ENCODE measurements at regions of chr20 and their contacts with region 1.

Region 1: GRCh38 chr20:23492292-23492691 is 1.4 kb downstream of the CST8 start:
- DNase-seq: no peak
- ATAC-seq: no peak
- H3K4me3 ChIP-seq: no peak overlapping the region
- H3K4me3 Mint-ChIP-seq: no peak overlapping the region
- H3K27ac ChIP-seq: no peak overlapping the region
- H3K27ac Mint-ChIP-seq: no peak overlapping the region
- H3K4me1 ChIP-seq: no peaks in the 10 kb centered on the region
- H3K4me1 Mint-ChIP-seq: no peaks in the 10 kb centered on the region
- H3K27me3 ChIP-seq: no peaks in the 10 kb centered on the region
- H3K27me3 Mint-ChIP-seq: no peaks in the 10 kb centered on the region
- CTCF ChIP-seq: no peak

Region 2: DNA sequence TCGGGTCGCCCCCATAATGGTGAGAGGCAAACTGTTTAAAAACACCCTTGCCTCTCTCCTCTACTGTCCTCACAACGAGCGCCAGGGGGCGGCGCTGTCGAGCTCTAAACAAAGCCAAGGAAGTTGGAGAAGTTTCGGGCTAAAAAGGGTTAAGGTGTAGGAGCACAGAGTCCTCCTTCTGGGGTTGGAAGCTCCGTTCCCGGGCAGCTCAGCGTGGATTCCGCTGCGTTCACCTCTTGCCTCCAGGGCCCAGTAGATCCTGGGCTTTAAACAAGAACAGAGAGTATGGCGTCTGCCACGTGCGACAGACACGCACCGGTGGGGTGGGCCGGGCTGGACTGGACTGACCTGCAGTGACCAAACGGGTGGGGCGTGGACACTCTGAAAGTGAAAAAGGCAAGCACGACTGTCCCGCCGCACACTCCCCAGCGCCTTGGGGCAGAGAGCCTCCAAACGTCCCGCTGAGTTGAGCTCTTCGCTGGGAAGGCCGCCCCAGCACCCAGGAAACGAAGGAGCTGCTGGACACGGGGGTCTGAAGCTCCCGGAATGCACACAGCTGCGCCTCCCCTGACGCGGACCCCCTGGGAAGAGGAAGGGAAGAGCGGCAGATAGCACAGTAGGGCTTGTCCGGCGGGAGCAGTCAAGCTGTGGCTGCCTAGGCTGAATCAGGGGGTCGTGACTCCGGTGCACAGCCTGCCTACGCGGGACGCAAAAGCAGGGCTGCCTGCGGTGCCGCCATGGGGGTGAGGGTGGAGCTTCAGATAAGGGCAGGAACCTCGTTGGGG is 441.3 kb before region 1 on chr20:
- CTCF ChIA-PET with region 1: no interaction called
- POLR2A ChIA-PET with region 1: no interaction called
- intact Hi-C with region 1: no loop called
- DNase-seq: peak in 3 of 14 experiments; percentile 19 to 52 (median 51)
- ATAC-seq: no peak
- H3K4me3 ChIP-seq: peak overlapping the region; percentile 33
- H3K4me3 Mint-ChIP-seq: no peak overlapping the region
- H3K27ac ChIP-seq: no peak overlapping the region
- H3K27ac Mint-ChIP-seq: no peak overlapping the region
- H3K4me1 ChIP-seq: peaks cover 20% of the 10 kb centered on the region
- H3K4me1 Mint-ChIP-seq: peaks cover 6% of the 10 kb centered on the region
- H3K27me3 ChIP-seq: peaks cover 34 to 50% of the 10 kb centered on the region in 2 experiments
- H3K27me3 Mint-ChIP-seq: peaks cover 45% of the 10 kb centered on the region
- CTCF ChIP-seq: no peak

Region 3: GRCh38 chr20:23086056-23086566 is 406.2 kb before region 1 on chr20 and contains the start of gene CD93:
- CTCF ChIA-PET with region 1: no interaction called
- POLR2A ChIA-PET with region 1: no interaction called
- intact Hi-C with region 1: no loop called
- DNase-seq: peak in 4 of 14 experiments; percentile 1 to 67 (median 54)
- ATAC-seq: peak; percentile 64
- H3K4me3 ChIP-seq: peak within 1 kb of the TSS; percentile 56
- H3K4me3 Mint-ChIP-seq: peak within 1 kb of the TSS; percentile 75
- H3K27ac ChIP-seq: peak within 1 kb of the TSS in 1 of 2 donors; percentile 18
- H3K27ac Mint-ChIP-seq: peak within 1 kb of the TSS; percentile 64
- H3K4me1 ChIP-seq: peaks cover 34% of the 10 kb centered on the region
- H3K4me1 Mint-ChIP-seq: peaks cover 18% of the 10 kb centered on the region
- H3K27me3 ChIP-seq: peaks cover 0 to 2% of the 10 kb centered on the region in 2 experiments
- H3K27me3 Mint-ChIP-seq: no peaks in the 10 kb centered on the region
- CTCF ChIP-seq: no peak
- total RNA-seq, gene CD93: 1.1 TPM

Region 4: GRCh38 chr20:23550232-23550631 is 57.9 kb after region 1 on chr20:
- CTCF ChIA-PET with region 1: no interaction called
- POLR2A ChIA-PET with region 1: no interaction called
- intact Hi-C with region 1: loop called in 1 of 2 experiments (anchors 10 kb)
- DNase-seq: no peak
- ATAC-seq: no peak
- H3K4me3 ChIP-seq: no peak overlapping the region
- H3K4me3 Mint-ChIP-seq: no peak overlapping the region
- H3K27ac ChIP-seq: no peak overlapping the region
- H3K27ac Mint-ChIP-seq: no peak overlapping the region
- H3K4me1 ChIP-seq: no peaks in the 10 kb centered on the region
- H3K4me1 Mint-ChIP-seq: no peaks in the 10 kb centered on the region
- H3K27me3 ChIP-seq: no peaks in the 10 kb centered on the region
- H3K27me3 Mint-ChIP-seq: no peaks in the 10 kb centered on the region
- CTCF ChIP-seq: no peak